ENCODE measurements at regions of chr11 and their contacts with region 1.

Region 1: GRCh38 chr11:96012086-96012824 is 88.3 kb upstream of the MTMR2 start:
- DNase-seq: peak; percentile 61
- ATAC-seq: peak; percentile 56
- H3K4me3 Mint-ChIP-seq: peak overlapping the region; percentile 45
- H3K27ac Mint-ChIP-seq: peak overlapping the region; percentile 90
- H3K4me1 Mint-ChIP-seq: peaks cover 58% of the 10 kb centered on the region
- H3K27me3 Mint-ChIP-seq: no peaks in the 10 kb centered on the region
- CTCF ChIP-seq: peak; percentile 55

Region 2: DNA sequence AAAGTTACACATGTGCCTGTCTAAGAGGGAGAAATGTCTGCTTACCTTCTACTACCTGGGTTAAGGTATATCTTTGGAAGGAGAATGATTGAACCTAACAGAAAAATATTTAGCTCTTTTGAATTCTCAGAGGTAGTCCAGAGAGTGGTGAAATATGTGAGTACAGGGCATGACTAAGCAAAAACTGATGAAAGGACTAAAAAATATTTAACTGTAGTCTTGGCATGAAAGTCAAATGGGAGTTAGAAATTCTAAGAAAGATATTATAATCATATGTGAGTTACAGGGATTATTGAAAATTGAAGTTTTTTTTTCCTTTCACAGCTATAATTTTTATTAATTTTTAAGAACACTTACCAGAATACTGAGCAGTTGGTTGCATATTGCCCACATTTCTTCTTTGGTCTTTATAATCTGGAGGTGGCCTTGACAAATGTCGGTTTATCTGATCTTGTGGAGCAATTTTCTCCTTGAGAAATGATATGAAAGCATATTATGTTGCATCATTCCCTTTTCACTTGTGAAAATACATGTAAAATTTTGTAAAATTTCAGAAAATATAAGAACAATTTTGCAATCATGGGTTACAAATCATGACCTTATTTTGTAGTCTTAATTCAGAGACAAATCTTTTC is 27.0 kb before region 1 on chr11:
- CTCF ChIA-PET with region 1: no interaction called
- POLR2A ChIA-PET with region 1: no interaction called
- intact Hi-C with region 1: no loop called
- DNase-seq: no peak
- ATAC-seq: no peak
- H3K4me3 Mint-ChIP-seq: no peak overlapping the region
- H3K27ac Mint-ChIP-seq: peak overlapping the region; percentile 29
- H3K4me1 Mint-ChIP-seq: peaks cover 4% of the 10 kb centered on the region
- H3K27me3 Mint-ChIP-seq: no peaks in the 10 kb centered on the region
- CTCF ChIP-seq: no peak

Region 3: DNA sequence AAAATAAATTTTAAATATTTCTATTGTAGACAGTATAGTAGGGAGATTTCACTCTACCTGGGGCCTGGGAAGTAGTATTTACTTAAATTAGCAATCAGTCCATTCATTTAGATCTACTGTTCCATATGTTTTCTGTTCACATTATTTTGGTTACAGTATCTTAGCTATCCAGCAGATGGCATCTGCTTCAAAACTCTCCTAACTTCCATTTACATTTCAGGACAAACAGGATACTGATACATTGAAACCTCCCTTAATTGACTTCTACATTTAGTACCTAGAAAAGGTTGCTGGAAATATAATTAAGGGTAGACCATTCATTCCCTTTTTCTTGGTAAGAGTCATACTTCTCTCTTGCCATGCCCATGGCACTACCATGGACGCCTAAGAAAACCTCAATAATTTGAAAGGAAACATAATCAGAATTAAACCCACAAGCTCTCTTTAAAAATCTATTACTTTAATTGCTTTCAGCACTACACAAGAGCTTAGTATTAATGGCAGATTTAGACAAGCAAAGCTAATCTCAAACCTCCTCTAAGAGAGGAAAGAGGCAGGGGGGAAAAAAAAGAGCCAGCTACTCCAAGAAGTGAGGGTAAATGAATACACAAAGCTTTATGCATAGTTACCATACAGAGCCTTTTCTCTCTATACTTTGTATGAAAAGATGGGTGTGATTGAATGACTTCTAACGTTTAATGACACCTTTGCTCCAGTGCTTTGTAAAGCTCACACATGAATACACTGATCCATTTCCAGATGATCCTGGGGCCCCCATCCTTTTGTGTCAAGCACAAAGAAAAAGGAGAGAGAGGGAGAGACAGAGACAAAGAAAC is 42.8 kb after region 1 on chr11:
- CTCF ChIA-PET with region 1: interaction called, 21 read pairs
- POLR2A ChIA-PET with region 1: no interaction called
- intact Hi-C with region 1: loop called (anchors 5 kb)
- DNase-seq: no peak
- ATAC-seq: peak; percentile 34
- H3K4me3 Mint-ChIP-seq: no peak overlapping the region
- H3K27ac Mint-ChIP-seq: peak overlapping the region; percentile 73
- H3K4me1 Mint-ChIP-seq: peaks cover 75% of the 10 kb centered on the region
- H3K27me3 Mint-ChIP-seq: no peaks in the 10 kb centered on the region
- CTCF ChIP-seq: peak; percentile 78

Region 4: GRCh38 chr11:96062134-96062533 is 49.9 kb after region 1 on chr11:
- CTCF ChIA-PET with region 1: interaction called, 4 read pairs
- POLR2A ChIA-PET with region 1: no interaction called
- intact Hi-C with region 1: loop called (anchors 5 kb)
- DNase-seq: peak; percentile 67
- ATAC-seq: peak; percentile 89
- H3K4me3 Mint-ChIP-seq: peak overlapping the region; percentile 1
- H3K27ac Mint-ChIP-seq: peak overlapping the region; percentile 85
- H3K4me1 Mint-ChIP-seq: peaks cover 72% of the 10 kb centered on the region
- H3K27me3 Mint-ChIP-seq: no peaks in the 10 kb centered on the region
- CTCF ChIP-seq: no peak

Region 5: DNA sequence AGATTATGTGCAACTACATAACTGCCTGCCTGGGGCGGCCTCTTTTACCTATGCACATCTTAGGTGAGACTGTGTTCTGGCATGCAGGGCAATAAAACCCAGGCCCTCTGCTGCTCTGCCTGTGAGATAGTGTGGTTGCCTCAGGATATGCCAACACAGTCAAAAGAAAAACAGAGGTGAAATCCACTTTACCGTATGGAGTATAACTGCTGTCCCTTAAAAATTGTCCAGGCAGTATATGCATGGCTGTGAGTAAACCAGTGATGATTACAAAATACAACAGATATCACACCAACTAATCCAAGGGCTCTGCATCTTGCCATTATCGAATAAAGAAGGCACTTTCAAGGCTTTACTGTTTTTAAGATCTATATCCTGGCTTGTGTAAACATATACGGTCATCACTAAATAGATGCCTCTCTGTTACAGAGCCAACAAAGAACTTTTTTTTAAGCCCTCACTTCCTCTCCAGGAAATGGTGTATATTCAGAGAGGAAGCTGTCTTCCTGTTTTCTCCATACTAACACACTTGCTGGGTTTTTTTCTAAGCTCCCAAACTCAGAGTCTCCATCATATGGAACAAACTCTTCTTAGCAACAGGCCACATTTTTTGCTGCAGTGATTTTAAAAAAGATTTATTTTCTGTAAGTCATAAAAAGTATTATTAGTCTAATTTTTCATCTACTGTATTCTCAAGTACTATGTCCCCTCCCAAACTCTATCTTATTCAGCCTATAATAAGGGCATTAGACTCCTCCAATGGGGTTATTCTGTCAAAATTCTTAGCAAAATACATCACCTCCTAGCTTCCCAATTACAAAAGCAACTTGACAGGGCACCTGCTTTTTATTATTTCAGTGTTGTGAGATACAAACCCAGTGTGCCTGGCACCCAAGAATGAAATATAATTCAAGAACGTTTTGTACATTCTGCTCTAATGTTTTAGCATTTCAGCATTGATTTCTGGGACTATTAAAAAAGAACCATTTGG is 195.5 kb after region 1 on chr11:
- CTCF ChIA-PET with region 1: no interaction called
- POLR2A ChIA-PET with region 1: no interaction called
- intact Hi-C with region 1: loop called (anchors 2 kb)
- DNase-seq: peak; percentile 46
- ATAC-seq: peak; percentile 18
- H3K4me3 Mint-ChIP-seq: peak overlapping the region; percentile 47
- H3K27ac Mint-ChIP-seq: peak overlapping the region; percentile 89
- H3K4me1 Mint-ChIP-seq: peaks cover 87% of the 10 kb centered on the region
- H3K27me3 Mint-ChIP-seq: no peaks in the 10 kb centered on the region
- CTCF ChIP-seq: no peak

Region 6: GRCh38 chr11:96235751-96236150 is 223.5 kb after region 1 on chr11:
- CTCF ChIA-PET with region 1: interaction called, 3 read pairs
- POLR2A ChIA-PET with region 1: no interaction called
- intact Hi-C with region 1: loop called (anchors 5 kb)
- DNase-seq: peak; percentile 83
- ATAC-seq: peak; percentile 98
- H3K4me3 Mint-ChIP-seq: peak overlapping the region; percentile 52
- H3K27ac Mint-ChIP-seq: peak overlapping the region; percentile 90
- H3K4me1 Mint-ChIP-seq: peaks cover 22% of the 10 kb centered on the region
- H3K27me3 Mint-ChIP-seq: no peaks in the 10 kb centered on the region
- CTCF ChIP-seq: no peak

Region 7: DNA sequence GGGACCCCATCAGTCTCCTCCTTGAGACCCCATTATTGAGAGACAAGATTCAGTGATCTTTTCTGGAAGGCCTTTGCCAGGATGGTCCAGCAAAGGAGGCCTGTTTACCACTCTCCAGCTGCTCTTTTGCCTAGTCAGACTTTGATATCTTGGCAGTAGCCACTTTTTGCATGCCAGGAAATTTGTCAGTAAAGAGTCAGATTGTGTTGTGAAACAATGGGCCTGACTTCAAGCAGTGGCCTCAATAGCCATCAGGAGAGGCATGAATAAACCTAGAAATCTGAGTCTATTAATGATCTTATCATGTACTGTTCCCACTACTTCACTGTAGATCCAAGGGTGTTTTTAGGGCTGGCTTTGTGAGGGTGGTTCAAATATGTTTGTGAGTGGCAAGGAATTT is 857.0 kb after region 1 on chr11:
- CTCF ChIA-PET with region 1: no interaction called
- POLR2A ChIA-PET with region 1: no interaction called
- intact Hi-C with region 1: no loop called
- DNase-seq: no peak
- ATAC-seq: no peak
- H3K4me3 Mint-ChIP-seq: no peak overlapping the region
- H3K27ac Mint-ChIP-seq: no peak overlapping the region
- H3K4me1 Mint-ChIP-seq: no peaks in the 10 kb centered on the region
- H3K27me3 Mint-ChIP-seq: no peaks in the 10 kb centered on the region
- CTCF ChIP-seq: no peak